ENCODE measurements at regions of chr10 and their contacts with region 1.

Region 1: GRCh38 chr10:44990302-44990655 is 10.4 kb upstream of the ZNF22 start:
- DNase-seq: peak; percentile 76 to 86
- H3K4me3 ChIP-seq: no peak overlapping the region
- H3K4me3 Mint-ChIP-seq: peak overlapping the region; percentile 37
- H3K27ac Mint-ChIP-seq: peak overlapping the region; percentile 86
- H3K4me1 ChIP-seq: peaks cover 51% of the 10 kb centered on the region
- H3K4me1 Mint-ChIP-seq: peaks cover 48% of the 10 kb centered on the region
- H3K27me3 ChIP-seq: no peaks in the 10 kb centered on the region
- H3K27me3 Mint-ChIP-seq: no peaks in the 10 kb centered on the region
- CTCF ChIP-seq: peak; percentile 93 to 95

Region 2: DNA sequence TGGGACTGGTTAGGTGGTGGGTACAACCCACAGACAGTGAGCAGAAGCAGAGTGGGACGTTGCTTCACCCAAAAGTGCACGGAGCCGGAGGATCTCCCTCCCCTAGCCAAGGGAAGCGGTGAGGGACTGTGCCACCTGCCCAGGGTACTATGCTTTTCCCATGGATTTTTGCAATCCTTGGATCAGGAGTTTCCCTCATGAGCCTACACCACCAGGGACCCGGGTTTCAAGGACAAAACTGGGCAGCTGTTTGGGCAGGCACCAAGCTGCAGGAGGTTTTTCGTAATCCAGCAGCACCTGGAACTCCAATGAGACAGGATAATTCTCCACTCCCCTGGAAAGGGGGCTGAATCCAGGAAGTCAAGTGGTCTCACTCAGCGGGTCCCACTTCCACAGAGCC is 396.3 kb before region 1 on chr10:
- CTCF ChIA-PET with region 1: no interaction called
- POLR2A ChIA-PET with region 1: no interaction called
- intact Hi-C with region 1: no loop called
- DNase-seq: no peak
- H3K4me3 ChIP-seq: no peak overlapping the region
- H3K4me3 Mint-ChIP-seq: no peak overlapping the region
- H3K27ac Mint-ChIP-seq: no peak overlapping the region
- H3K4me1 ChIP-seq: no peaks in the 10 kb centered on the region
- H3K4me1 Mint-ChIP-seq: no peaks in the 10 kb centered on the region
- H3K27me3 ChIP-seq: no peaks in the 10 kb centered on the region
- H3K27me3 Mint-ChIP-seq: peaks cover 46% of the 10 kb centered on the region
- CTCF ChIP-seq: no peak

Region 3: GRCh38 chr10:44952779-44953231 is 37.5 kb before region 1 on chr10:
- CTCF ChIA-PET with region 1: interaction called, 4 read pairs
- POLR2A ChIA-PET with region 1: no interaction called
- intact Hi-C with region 1: loop called (anchors 1 kb)
- DNase-seq: peak; percentile 76 to 85
- H3K4me3 ChIP-seq: no peak overlapping the region
- H3K4me3 Mint-ChIP-seq: peak overlapping the region; percentile 21
- H3K27ac Mint-ChIP-seq: peak overlapping the region; percentile 8
- H3K4me1 ChIP-seq: peaks cover 55% of the 10 kb centered on the region
- H3K4me1 Mint-ChIP-seq: peaks cover 47% of the 10 kb centered on the region
- H3K27me3 ChIP-seq: no peaks in the 10 kb centered on the region
- H3K27me3 Mint-ChIP-seq: no peaks in the 10 kb centered on the region
- CTCF ChIP-seq: no peak

Region 4: GRCh38 chr10:44959247-44960087 is 30.8 kb before region 1 on chr10 and contains the start of gene RASSF4:
- CTCF ChIA-PET with region 1: interaction called, 5 read pairs
- POLR2A ChIA-PET with region 1: interaction called, 5 read pairs
- intact Hi-C with region 1: loop called (anchors 1 kb)
- DNase-seq: peak; percentile 97 to 99
- H3K4me3 ChIP-seq: peak within 1 kb of the TSS; percentile 82
- H3K4me3 Mint-ChIP-seq: peak within 1 kb of the TSS; percentile 78
- H3K27ac Mint-ChIP-seq: peak within 1 kb of the TSS; percentile 79
- H3K4me1 ChIP-seq: peaks cover 41% of the 10 kb centered on the region
- H3K4me1 Mint-ChIP-seq: peaks cover 40% of the 10 kb centered on the region
- H3K27me3 ChIP-seq: no peaks in the 10 kb centered on the region
- H3K27me3 Mint-ChIP-seq: no peaks in the 10 kb centered on the region
- CTCF ChIP-seq: no peak
- total RNA-seq, gene RASSF4: 40.8 and 55.6 TPM in 2 replicates

Region 5: GRCh38 chr10:45082176-45082575 is 91.9 kb after region 1 on chr10:
- CTCF ChIA-PET with region 1: no interaction called
- POLR2A ChIA-PET with region 1: no interaction called
- intact Hi-C with region 1: no loop called
- DNase-seq: no peak
- H3K4me3 ChIP-seq: no peak overlapping the region
- H3K4me3 Mint-ChIP-seq: no peak overlapping the region
- H3K27ac Mint-ChIP-seq: no peak overlapping the region
- H3K4me1 ChIP-seq: no peaks in the 10 kb centered on the region
- H3K4me1 Mint-ChIP-seq: no peaks in the 10 kb centered on the region
- H3K27me3 ChIP-seq: no peaks in the 10 kb centered on the region
- H3K27me3 Mint-ChIP-seq: peaks cover 17% of the 10 kb centered on the region
- CTCF ChIP-seq: no peak

Region 6: DNA sequence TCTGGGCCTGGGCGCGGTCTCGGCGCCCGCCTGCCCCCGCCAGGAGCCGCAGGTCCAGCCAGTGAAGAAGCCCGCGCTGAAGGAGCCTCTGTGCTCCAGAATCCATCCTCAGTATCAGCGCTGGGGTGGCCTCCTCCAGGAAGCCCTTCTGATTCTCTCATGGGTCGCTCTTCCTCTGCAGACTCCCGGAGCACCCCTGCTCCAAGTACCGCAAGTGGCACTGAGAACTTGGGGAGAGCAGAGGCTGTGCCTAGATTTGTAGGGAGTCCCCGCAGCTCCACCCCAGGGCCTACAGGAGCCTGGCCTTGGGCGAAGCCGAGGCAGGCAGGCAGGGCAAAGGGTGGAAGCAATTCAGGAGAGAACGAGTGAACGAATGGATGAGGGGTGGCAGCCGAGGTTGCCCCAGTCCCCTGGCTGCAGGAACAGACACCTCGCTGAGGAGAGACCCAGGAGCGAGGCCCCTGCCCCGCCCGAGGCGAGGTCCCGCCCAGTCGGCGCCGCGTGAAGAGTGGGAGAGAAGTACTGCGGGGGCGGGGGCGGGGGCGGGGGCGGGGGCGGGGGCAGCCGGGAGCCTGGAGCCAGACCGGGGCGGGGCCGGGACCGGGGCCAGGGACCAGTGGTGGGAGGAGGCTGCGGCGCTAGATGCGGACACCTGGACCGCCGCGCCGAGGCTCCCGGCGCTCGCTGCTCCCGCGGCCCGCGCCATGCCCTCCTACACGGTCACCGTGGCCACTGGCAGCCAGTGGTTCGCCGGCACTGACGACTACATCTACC is 383.5 kb after region 1 on chr10 and contains the start of gene ALOX5:
- CTCF ChIA-PET with region 1: no interaction called
- POLR2A ChIA-PET with region 1: no interaction called
- intact Hi-C with region 1: no loop called
- DNase-seq: peak; percentile 69 to 75
- H3K4me3 ChIP-seq: peak within 1 kb of the TSS; percentile 35
- H3K4me3 Mint-ChIP-seq: peak within 1 kb of the TSS; percentile 82
- H3K27ac Mint-ChIP-seq: no peak within 1 kb of the TSS
- H3K4me1 ChIP-seq: peaks cover 9% of the 10 kb centered on the region
- H3K4me1 Mint-ChIP-seq: no peaks in the 10 kb centered on the region
- H3K27me3 ChIP-seq: peaks cover 13% of the 10 kb centered on the region
- H3K27me3 Mint-ChIP-seq: peaks cover 36% of the 10 kb centered on the region
- CTCF ChIP-seq: no peak
- total RNA-seq, gene ALOX5: not detected in 2 replicates